Colonic mucosa (tissue), 4 donors: ENCODE measurements at regions of chr5 and their contacts with region 1.

Region 1: DNA sequence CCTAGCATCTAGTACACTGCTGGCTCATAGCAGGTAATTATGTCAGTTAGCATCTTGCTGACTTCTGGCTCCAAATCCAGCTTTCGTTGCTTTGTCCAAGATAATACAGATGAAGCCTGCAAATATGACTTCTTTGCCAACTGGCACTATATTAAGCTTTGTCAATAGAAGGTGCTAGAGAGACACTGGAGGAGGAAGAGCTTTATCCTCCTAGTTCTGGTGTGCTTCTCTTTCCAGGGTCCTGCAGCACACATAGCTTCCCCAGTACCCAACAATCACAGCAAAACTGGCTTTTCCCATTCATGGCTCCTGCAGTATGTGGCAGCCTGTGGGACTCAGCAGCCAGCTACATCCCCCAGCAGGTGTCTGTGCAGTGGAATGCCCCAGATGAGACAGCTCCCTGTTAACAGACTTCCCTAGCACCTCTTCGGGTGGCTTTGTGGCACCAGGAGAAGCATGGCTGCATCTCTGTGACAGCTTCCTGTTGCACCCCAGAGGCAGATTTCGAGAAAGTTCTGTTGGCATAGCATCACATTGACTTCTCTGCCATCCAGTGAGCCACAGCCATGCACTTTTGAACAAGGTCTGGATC is 147.8 kb downstream of the OXCT1 start:
- DNase-seq: no peak
- H3K4me3 ChIP-seq: no peak overlapping the region
- H3K27ac ChIP-seq: no peak overlapping the region
- H3K4me1 ChIP-seq: no peaks in the 10 kb centered on the region
- H3K27me3 ChIP-seq: no peaks in the 10 kb centered on the region
- CTCF ChIP-seq: no peak

Region 2: GRCh38 chr5:41835645-41836044 is 113.2 kb after region 1 on chr5:
- intact Hi-C with region 1: loop called (anchors 10 kb)
- DNase-seq: no peak
- H3K4me3 ChIP-seq: no peak overlapping the region
- H3K27ac ChIP-seq: no peak overlapping the region
- H3K4me1 ChIP-seq: no peaks in the 10 kb centered on the region
- H3K27me3 ChIP-seq: no peaks in the 10 kb centered on the region
- CTCF ChIP-seq: no peak